ENCODE measurements at regions of chr1 and their contacts with region 1.

Region 1: DNA sequence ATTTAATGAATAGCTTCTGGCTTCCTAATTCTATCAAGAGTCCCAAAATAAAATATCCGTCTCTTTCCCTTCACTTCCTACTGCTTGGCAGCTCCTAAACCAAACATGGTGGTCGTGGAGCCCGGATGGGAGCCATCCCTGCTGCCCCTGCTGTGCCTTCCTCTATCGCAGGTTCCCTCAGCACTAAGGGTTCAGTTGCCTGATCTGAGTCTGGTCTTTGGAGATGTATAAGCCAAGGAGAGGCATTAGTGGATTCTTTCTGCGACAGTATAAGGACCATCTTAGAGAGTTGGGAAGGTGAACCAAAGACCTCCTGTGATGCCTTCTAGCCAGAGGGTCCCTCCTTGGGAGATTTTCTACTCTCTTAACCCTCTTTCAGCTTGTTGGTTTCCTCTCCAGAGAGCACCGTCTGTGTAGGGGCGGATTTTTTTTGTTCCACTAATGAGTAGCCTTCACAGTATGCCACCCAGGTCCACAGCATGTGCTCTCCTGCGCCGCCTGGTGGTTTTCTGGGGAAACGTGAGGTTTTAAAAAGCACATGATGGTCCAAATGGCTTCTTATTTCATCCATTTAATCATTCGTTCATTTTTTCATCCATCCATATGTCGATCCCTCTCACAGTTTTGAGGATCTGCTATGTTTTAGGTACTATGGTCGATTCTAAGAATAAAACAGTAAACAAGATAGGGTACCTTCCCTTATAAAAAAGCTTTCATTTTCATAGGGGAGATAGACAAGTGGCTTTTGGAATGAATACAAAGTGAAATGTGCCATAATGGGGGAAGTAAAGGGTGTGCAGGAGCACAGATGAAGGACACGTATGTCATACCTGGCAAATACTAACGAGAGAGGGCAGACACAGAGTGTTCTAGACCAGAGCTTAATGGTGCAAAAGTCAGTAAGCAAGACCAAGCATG is 71.0 kb downstream of the NFASC start:
- DNase-seq: peak; percentile 81
- H3K4me3 ChIP-seq: no peak overlapping the region
- H3K27ac ChIP-seq: no peak overlapping the region
- H3K4me1 ChIP-seq: no peaks in the 10 kb centered on the region
- H3K27me3 ChIP-seq: no peaks in the 10 kb centered on the region
- CTCF ChIP-seq: peak; percentile 84 to 94 (median 87)
- POLR2A ChIP-seq: no peak

Region 2: DNA sequence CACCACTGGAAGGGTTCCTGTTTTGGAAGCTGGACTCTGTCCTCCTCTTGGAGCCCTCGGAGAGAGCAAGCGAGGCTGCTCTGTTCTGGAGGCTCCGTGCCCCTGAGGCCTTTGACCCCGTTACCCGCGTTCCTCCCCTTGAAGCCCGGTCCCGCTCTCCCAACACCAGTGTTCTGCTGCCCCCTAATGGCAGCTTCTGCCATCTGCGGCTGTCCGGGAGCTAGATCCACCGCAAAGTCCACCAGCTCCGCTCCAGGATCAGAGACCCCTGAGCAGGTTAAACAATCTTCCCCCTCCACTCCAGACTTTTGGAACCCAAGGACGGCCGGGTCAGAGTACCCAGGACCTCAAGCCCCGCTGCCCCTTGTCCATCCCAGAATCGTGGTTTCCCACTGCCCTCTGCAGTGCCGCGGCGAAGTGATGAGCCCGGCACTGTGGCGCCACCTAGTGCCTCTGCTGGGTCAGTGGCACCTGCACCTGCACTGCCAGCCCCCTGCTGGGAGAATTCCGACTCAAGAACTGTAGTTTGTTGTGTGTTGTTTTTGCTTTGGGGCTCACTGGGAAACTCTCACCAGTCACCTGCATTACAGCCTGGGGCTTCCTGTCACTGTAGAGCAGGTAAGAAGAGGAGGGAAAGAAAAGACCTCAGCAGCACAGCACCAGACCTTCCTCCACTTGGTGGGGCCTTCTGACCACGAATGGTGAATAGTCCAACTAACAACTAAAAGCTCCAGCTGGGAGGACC is 134.6 kb before region 1 on chr1:
- intact Hi-C with region 1: loop called (anchors 10 kb)
- DNase-seq: peak; percentile 90
- H3K4me3 ChIP-seq: peak overlapping the region; percentile 45 to 57
- H3K27ac ChIP-seq: no peak overlapping the region
- H3K4me1 ChIP-seq: no peaks in the 10 kb centered on the region
- H3K27me3 ChIP-seq: no peaks in the 10 kb centered on the region
- CTCF ChIP-seq: peak; percentile 85 to 97 (median 96)
- POLR2A ChIP-seq: no peak

Region 3: DNA sequence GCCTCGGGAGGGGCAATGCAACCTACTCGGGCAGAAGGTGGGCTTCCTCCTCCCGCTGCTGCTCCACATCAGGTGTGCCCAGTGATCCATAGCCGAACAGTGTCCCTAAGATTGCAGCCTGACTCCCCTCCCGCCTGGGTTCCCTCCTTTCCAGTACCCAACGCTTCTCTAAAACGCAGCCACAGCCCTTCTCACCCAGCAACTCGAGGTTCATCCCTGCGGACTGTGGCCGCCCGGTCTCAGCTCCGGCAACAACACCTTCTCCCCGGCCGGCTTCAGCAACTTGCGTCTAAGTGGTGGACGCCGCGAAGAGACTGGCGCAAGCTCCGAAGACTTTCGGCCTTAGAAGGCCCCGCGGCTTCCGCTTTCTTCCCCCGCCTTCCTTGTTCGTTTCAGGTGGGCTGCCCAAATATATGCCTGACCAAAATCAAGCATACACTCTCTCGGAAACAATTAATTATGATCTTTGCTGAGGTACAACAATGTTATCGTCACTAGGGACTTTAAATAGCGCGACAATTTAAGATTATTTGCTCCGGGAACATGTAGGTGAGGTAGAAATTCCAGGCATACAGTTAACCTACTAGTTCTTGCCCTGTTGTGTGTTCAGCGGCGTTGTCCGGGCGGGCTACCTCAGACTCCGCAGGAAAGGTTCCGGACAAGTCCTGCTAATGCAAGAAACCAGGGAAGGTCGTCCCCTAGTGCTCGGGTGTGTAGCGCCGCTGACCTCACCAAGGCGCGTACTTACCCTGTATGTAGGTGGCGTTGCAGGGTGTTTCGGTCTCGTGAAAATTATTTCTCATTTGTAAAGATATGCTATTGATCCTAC is 180.2 kb after region 1 on chr1 and contains the start of gene RBBP5:
- intact Hi-C with region 1: no loop called
- DNase-seq: peak; percentile 97
- H3K4me3 ChIP-seq: peak within 1 kb of the TSS; percentile 84 to 98
- H3K27ac ChIP-seq: peak within 1 kb of the TSS; percentile 93 to 98
- H3K4me1 ChIP-seq: peaks cover 13% of the 10 kb centered on the region
- H3K27me3 ChIP-seq: no peaks in the 10 kb centered on the region
- CTCF ChIP-seq: peak; percentile 45 to 69 (median 57)
- POLR2A ChIP-seq: no peak
- total RNA-seq, gene RBBP5: 19.1 to 20.3 TPM